Astrocyte of the cerebellum (primary cell): ENCODE measurements at regions of chr18 and their contacts with region 1.

Region 1: GRCh38 chr18:74171910-74172606 is 23.7 kb downstream of the TIMM21 start:
- DNase-seq: no peak
- H3K4me3 ChIP-seq: no peak overlapping the region
- CTCF ChIP-seq: no peak

Region 2: GRCh38 chr18:74251297-74252038 is 79.4 kb after region 1 on chr18:
- in situ Hi-C with region 1: loop called (anchors 25 kb)
- DNase-seq: no peak
- H3K4me3 ChIP-seq: no peak overlapping the region
- CTCF ChIP-seq: no peak